Left ventricle myocardium inferior (tissue), 1 donor: ENCODE measurements at regions of chr15 and their contacts with region 1.

Region 1: GRCh38 chr15:87547470-87548181 is 708.9 kb downstream of the NTRK3 start:
- DNase-seq: no peak
- H3K4me3 ChIP-seq: no peak overlapping the region
- H3K27ac ChIP-seq: no peak overlapping the region
- H3K4me1 ChIP-seq: no peaks in the 10 kb centered on the region
- H3K27me3 ChIP-seq: no peaks in the 10 kb centered on the region
- CTCF ChIP-seq: no peak

Region 2: DNA sequence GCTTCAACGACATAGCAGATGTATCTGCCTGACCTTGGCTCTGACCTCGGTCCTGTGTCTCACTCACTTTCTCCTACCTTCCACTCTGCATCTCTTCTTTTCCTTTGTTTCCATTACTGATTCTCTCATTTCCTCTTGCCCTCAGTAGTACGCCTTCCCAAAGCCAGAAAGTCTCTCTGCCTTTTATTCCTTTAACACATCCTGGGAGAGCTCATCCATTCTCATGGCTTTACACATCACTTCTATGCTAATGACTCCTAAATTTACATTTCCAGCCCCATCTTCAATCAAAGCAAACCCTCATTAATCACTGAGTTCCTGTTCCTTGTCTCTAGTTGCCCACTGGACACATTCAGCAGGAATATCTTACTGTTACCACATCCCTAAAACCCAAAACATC is 229.7 kb before region 1 on chr15:
- intact Hi-C with region 1: no loop called
- DNase-seq: no peak
- H3K4me3 ChIP-seq: no peak overlapping the region
- H3K27ac ChIP-seq: no peak overlapping the region
- H3K4me1 ChIP-seq: no peaks in the 10 kb centered on the region
- H3K27me3 ChIP-seq: no peaks in the 10 kb centered on the region
- CTCF ChIP-seq: no peak

Region 3: DNA sequence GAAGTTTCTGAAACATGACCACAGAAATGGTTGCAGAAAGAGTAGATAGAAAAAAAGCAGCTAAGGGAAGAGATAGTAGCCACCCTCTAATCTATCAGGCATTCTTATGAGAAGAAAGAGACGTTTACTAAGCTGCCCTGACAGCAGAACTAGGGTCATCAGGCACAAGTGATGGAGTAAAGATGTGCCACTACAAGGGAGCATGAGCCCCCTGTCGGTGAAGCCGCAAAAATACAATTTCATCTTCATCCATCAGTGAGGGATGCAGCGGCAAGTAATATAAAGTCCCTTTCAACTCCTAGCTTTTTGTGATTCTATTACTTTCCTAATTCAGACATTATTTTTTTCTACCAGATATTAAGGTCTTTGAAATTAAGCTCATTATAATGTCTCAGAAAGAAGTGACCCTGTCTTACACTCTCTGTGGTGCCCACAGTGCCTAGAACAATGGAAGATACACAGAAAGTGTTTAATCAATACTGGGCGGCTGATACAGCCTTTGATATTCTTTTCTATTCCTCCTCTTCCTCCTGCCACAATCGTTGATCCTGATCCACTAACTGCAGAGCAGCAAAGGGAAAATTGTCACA is 57.3 kb after region 1 on chr15:
- intact Hi-C with region 1: loop called (anchors 10 kb)
- DNase-seq: no peak
- H3K4me3 ChIP-seq: no peak overlapping the region
- H3K27ac ChIP-seq: no peak overlapping the region
- H3K4me1 ChIP-seq: peaks cover 14% of the 10 kb centered on the region
- H3K27me3 ChIP-seq: no peaks in the 10 kb centered on the region
- CTCF ChIP-seq: peak; percentile 56

Region 4: GRCh38 chr15:87648278-87648677 is 100.7 kb after region 1 on chr15:
- intact Hi-C with region 1: no loop called
- DNase-seq: no peak
- H3K4me3 ChIP-seq: no peak overlapping the region
- H3K27ac ChIP-seq: no peak overlapping the region
- H3K4me1 ChIP-seq: no peaks in the 10 kb centered on the region
- H3K27me3 ChIP-seq: no peaks in the 10 kb centered on the region
- CTCF ChIP-seq: no peak